OCI-LY7 (cell line): ENCODE measurements at regions of chr6 and their contacts with region 1.

Region 1: DNA sequence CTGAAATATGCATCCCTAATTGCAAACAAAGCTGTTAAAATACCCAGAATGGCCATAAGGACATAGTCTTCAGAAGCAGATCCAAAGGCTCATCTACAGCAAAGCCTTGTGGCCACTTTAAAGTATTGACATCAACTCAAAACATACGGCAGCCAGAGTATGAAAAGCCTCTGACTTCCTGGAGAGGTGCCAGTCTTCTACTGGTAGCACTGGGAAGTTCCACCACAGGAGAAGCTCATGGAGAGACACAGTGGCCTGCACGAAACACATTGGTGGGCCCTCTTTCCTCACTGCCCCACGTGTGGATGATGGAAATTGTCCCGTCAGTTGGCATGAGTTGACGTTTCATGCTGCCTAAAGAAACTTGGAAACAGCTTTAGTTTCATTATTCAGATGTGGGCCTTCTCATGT is 202.6 kb upstream of the HEY2 start:
- DNase-seq: no peak
- H3K4me3 ChIP-seq: no peak overlapping the region
- H3K27ac ChIP-seq: no peak overlapping the region
- H3K4me1 ChIP-seq: no peaks in the 10 kb centered on the region
- CTCF ChIP-seq: no peak

Region 2: DNA sequence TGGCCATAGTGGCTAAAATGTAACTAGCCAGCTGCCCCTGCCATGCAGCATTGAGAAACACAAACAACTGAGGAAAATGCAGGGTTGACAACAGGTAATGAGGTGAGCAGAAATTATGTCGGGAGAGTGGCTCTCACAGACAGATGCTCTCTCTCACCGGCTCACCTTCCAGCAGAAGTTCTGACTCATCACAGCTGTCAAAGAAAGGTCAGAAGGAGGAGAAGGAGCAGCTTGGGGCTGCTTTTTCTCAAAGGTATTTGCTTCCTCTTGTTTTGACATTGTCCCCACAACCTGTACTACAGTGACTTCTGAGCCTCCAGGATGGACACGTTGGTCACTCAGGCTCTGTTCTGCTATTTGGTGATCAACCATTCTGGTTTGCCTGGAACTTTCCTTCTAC is 12.1 kb after region 1 on chr6:
- CTCF ChIA-PET with region 1: no interaction called
- POLR2A ChIA-PET with region 1: interaction called, 14 read pairs
- intact Hi-C with region 1: no loop called
- DNase-seq: no peak
- H3K4me3 ChIP-seq: no peak overlapping the region
- H3K27ac ChIP-seq: no peak overlapping the region
- H3K4me1 ChIP-seq: no peaks in the 10 kb centered on the region
- CTCF ChIP-seq: no peak

Region 3: GRCh38 chr6:125834348-125834747 is 287.5 kb after region 1 on chr6:
- CTCF ChIA-PET with region 1: no interaction called
- POLR2A ChIA-PET with region 1: no interaction called
- intact Hi-C with region 1: no loop called
- DNase-seq: no peak
- H3K4me3 ChIP-seq: no peak overlapping the region
- H3K27ac ChIP-seq: no peak overlapping the region
- H3K4me1 ChIP-seq: peaks cover 8% of the 10 kb centered on the region
- CTCF ChIP-seq: no peak